ENCODE measurements at regions of chr9 and their contacts with region 1.

Region 1: GRCh38 chr9:132406554-132407122 is at the start of gene TTF1:
- DNase-seq: peak; percentile 98
- H3K4me3 ChIP-seq: peak within 1 kb of the TSS; percentile 78
- H3K27ac ChIP-seq: peak within 1 kb of the TSS; percentile 16
- H3K4me1 ChIP-seq: peaks cover 61% of the 10 kb centered on the region
- CTCF ChIP-seq: no peak
- total RNA-seq, gene TTF1: 17.8 and 26.6 TPM in 2 replicates

Region 2: DNA sequence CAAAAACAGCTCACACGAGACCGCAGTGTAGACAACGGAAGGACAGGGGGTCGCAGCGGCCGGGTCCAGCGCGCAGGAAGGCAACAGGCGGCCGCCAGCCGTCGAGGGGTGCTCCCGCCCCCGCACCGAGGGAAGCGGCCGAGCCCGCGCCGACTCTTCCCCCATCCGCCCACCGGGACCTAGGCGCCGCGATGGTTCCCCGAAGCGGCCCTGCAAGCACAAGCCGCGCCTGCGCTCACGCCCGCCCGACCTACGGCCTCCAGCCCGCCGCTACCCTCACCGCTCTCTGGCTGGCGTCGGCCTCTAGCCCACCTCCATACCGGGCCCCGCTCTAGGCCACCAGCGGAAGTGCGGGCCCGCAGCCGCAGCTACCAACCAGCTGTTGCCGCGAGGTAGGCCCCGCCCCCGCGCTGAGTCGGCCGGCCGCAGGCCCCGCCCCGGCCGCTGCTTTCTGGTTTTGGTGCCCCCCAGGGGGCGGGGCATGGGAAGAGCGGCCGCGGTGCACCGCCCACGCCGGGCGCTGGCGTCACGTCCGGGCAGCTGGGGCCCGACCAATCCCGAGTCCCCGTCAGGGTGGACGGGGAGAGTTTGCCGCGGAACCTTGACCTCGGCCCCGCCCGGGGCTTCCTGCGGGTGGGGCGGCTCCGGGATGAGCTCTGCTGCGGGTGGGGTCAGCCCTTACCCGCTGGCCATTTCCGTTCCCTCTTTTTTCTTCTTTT is 51.8 kb before region 1 on chr9 and contains the start of gene SETX:
- CTCF ChIA-PET with region 1: interaction called, 3 read pairs
- POLR2A ChIA-PET with region 1: no interaction called
- intact Hi-C with region 1: loop called (anchors 2 kb)
- DNase-seq: peak; percentile 98
- H3K4me3 ChIP-seq: peak within 1 kb of the TSS; percentile 97
- H3K27ac ChIP-seq: peak within 1 kb of the TSS; percentile 77
- H3K4me1 ChIP-seq: peaks cover 53% of the 10 kb centered on the region
- CTCF ChIP-seq: no peak
- total RNA-seq, gene SETX: 79.2 and 85.8 TPM in 2 replicates

Region 3: GRCh38 chr9:132381966-132382541 is 24.6 kb before region 1 on chr9:
- CTCF ChIA-PET with region 1: no interaction called
- POLR2A ChIA-PET with region 1: interaction called, 3 read pairs
- intact Hi-C with region 1: loop called (anchors 1 kb)
- DNase-seq: peak; percentile 93
- H3K4me3 ChIP-seq: peak overlapping the region; percentile 55
- H3K27ac ChIP-seq: peak overlapping the region; percentile 99
- H3K4me1 ChIP-seq: peaks cover 75% of the 10 kb centered on the region
- CTCF ChIP-seq: no peak

Region 4: GRCh38 chr9:132507746-132508469 is 101.3 kb after region 1 on chr9:
- CTCF ChIA-PET with region 1: no interaction called
- POLR2A ChIA-PET with region 1: no interaction called
- intact Hi-C with region 1: loop called (anchors 1 kb)
- DNase-seq: peak; percentile 77
- H3K4me3 ChIP-seq: no peak overlapping the region
- H3K27ac ChIP-seq: no peak overlapping the region
- H3K4me1 ChIP-seq: no peaks in the 10 kb centered on the region
- CTCF ChIP-seq: peak; percentile 91

Region 5: DNA sequence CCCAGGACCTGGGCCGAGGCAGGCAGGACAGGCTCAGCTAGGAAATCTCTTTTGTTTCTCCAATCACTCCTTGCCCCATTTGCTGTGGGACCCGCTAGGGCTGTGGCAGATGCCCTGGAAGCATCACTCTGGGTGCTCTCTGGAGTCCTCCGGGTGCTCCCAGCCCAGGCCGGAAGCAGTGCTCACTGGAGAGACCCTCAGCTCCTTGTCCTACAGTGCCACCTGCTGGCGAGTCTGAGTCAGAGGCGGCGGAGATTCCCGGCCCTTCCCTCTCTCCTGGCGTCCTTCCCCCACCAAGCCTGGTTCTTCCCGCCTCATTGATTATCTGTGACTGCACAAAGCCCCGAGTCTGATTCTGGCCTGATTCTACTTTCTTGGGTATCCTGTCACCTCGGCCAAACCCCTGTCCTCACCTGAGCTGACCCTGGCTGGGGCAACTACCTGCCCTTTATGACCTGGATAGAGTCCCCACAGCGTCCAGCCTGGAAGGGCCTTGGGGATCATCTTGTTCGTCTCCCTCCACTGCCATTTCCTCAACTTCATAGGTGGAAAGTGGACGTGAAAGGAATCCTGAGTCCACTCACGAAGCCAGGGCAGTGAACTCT is 168.5 kb after region 1 on chr9:
- CTCF ChIA-PET with region 1: no interaction called
- POLR2A ChIA-PET with region 1: no interaction called
- intact Hi-C with region 1: loop called (anchors 1 kb)
- DNase-seq: peak; percentile 79
- H3K4me3 ChIP-seq: no peak overlapping the region
- H3K27ac ChIP-seq: no peak overlapping the region
- H3K4me1 ChIP-seq: no peaks in the 10 kb centered on the region
- CTCF ChIP-seq: peak; percentile 89

Region 6: DNA sequence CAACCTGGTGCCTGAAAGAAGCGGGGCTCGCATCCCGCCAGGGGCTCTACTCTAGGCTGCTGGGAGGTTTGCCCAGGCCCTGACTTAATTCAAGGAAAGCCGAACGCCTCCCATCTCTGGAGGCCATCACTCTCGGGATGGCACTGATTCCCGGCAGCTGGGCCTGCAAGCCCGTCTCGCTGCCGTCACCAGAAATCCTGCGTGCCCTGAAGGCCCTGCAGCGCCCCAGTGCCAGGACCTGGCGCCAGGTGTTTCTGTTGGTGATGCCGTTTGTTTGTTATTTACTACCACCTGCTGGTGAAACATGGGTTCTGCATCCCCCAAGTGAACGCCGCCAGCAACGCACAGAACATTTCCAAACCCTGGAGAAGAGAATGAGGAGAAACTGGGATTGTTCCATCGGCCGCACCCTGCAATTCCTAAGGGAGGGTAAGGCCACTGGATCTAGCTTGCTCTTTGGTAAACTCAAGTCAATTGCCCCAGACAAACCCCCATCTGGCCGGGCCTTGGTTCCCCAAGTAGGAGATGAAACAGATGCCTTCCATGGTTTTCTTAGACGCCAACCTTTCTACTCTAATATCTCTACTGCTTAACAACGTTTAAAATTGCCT is 393.5 kb after region 1 on chr9:
- CTCF ChIA-PET with region 1: no interaction called
- POLR2A ChIA-PET with region 1: no interaction called
- intact Hi-C with region 1: loop called (anchors 1 kb)
- DNase-seq: peak; percentile 73
- H3K4me3 ChIP-seq: no peak overlapping the region
- H3K27ac ChIP-seq: no peak overlapping the region
- H3K4me1 ChIP-seq: no peaks in the 10 kb centered on the region
- CTCF ChIP-seq: peak; percentile 89